CD4-positive, alpha-beta memory T cell (primary cell): ENCODE measurements at regions of chr1 and their contacts with region 1.

Region 1: DNA sequence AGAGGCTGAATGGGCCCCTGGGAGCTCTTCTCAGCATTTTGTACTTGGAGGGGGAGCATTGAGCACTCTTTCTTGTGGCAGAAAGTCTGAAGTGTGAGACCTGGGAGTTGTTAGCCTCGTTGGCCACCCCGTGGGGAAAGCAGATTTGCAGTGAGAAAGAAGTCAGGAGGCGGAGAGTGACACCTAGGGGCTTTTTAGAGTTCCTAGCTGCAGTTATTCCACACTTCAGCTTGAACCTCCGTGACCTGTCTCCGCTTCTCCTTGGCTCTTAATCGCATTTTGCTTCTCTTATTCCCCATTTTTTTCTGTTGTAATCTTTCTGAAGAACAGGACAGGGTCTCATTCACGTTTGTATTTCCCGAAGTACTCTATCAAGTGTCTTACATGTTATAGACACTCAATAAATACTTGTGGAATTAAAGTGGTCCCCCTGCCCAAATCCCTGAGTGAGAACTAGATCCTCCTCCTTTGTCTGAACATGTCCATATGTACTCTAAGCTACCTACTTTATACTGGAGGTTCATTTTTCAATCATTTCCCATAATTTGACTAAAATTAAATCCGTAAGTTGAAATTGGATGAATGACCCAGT is 14.5 kb upstream of the C1orf141 start:
- DNase-seq: peak; percentile 43 to 62 (median 56)
- H3K4me3 ChIP-seq: no peak overlapping the region
- H3K4me3 Mint-ChIP-seq: peak overlapping the region in 1 of 8 donors; percentile 23
- H3K27ac ChIP-seq: no peak overlapping the region
- H3K27ac Mint-ChIP-seq: peak overlapping the region in 1 of 7 donors; percentile 14
- H3K4me1 ChIP-seq: peaks cover 18% of the 10 kb centered on the region
- H3K4me1 Mint-ChIP-seq: peaks cover 17 to 38% (median 23%) of the 10 kb centered on the region in 4 donors
- H3K27me3 ChIP-seq: no peaks in the 10 kb centered on the region
- H3K27me3 Mint-ChIP-seq: peaks cover 1 to 2% of the 10 kb centered on the region in 2 donors

Region 2: GRCh38 chr1:66764994-66765578 is 384.2 kb before region 1 on chr1:
- CTCF ChIA-PET with region 1: interaction called, 51 read pairs
- POLR2A ChIA-PET with region 1: interaction called, 3 read pairs
- intact Hi-C with region 1: loop called (anchors 1 kb)
- DNase-seq: peak; percentile 53 to 59 (median 54)
- H3K4me3 ChIP-seq: no peak overlapping the region
- H3K4me3 Mint-ChIP-seq: no peak overlapping the region
- H3K27ac ChIP-seq: no peak overlapping the region
- H3K27ac Mint-ChIP-seq: no peak overlapping the region
- H3K4me1 ChIP-seq: peaks cover 13% of the 10 kb centered on the region
- H3K4me1 Mint-ChIP-seq: peaks cover 13 to 17% (median 15%) of the 10 kb centered on the region in 4 donors
- H3K27me3 ChIP-seq: no peaks in the 10 kb centered on the region
- H3K27me3 Mint-ChIP-seq: no peaks in the 10 kb centered on the region

Region 3: GRCh38 chr1:66996018-66996682 is 153.1 kb before region 1 on chr1:
- CTCF ChIA-PET with region 1: interaction called, 62 read pairs
- POLR2A ChIA-PET with region 1: interaction called, 4 read pairs
- intact Hi-C with region 1: loop called (anchors 1 kb)
- DNase-seq: peak; percentile 50 to 63 (median 60)
- H3K4me3 ChIP-seq: no peak overlapping the region
- H3K4me3 Mint-ChIP-seq: no peak overlapping the region
- H3K27ac ChIP-seq: no peak overlapping the region
- H3K27ac Mint-ChIP-seq: peak overlapping the region in 1 of 7 donors; percentile 30
- H3K4me1 ChIP-seq: peaks cover 14% of the 10 kb centered on the region
- H3K4me1 Mint-ChIP-seq: peaks cover 10 to 21% (median 19%) of the 10 kb centered on the region in 4 donors
- H3K27me3 ChIP-seq: no peaks in the 10 kb centered on the region
- H3K27me3 Mint-ChIP-seq: no peaks in the 10 kb centered on the region

Region 4: GRCh38 chr1:67053785-67054772 is 95.2 kb before region 1 on chr1 and contains the start of gene SLC35D1:
- CTCF ChIA-PET with region 1: interaction called, 5 read pairs
- POLR2A ChIA-PET with region 1: interaction called, 5 read pairs
- intact Hi-C with region 1: loop called (anchors 2 kb)
- DNase-seq: peak; percentile 68 to 82 (median 77)
- H3K4me3 ChIP-seq: peak within 1 kb of the TSS; percentile 73 to 88
- H3K4me3 Mint-ChIP-seq: peak within 1 kb of the TSS; percentile 93 to 96 (median 95)
- H3K27ac ChIP-seq: peak within 1 kb of the TSS; percentile 91
- H3K27ac Mint-ChIP-seq: peak within 1 kb of the TSS; percentile 66 to 98 (median 97)
- H3K4me1 ChIP-seq: peaks cover 25% of the 10 kb centered on the region
- H3K4me1 Mint-ChIP-seq: peaks cover 21 to 38% (median 28%) of the 10 kb centered on the region in 4 donors
- H3K27me3 ChIP-seq: no peaks in the 10 kb centered on the region
- H3K27me3 Mint-ChIP-seq: no peaks in the 10 kb centered on the region
- total RNA-seq, gene SLC35D1: 16.9 to 17.7 TPM

Region 5: DNA sequence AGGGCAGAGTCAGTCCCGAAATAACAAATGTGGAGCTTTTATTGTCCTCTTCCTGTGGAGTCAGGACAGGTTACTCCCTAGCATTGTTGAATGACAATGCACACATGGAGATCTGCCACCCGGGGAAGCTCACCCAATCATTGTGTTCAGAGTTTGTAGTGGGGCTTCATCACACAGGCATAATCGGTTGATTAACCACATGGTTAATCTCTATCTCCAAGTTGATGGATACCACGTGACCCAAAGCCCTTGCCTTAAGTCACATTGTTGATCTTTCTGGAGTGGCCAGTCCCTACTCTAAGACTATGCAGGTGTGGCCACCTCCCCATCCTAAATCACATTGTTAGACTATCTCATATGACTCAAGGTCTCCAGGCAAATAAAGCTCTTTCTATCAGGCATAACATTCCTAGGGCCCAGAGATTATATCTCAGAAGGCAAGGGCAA is 11.9 kb before region 1 on chr1:
- CTCF ChIA-PET with region 1: interaction called, 12 read pairs
- POLR2A ChIA-PET with region 1: no interaction called
- intact Hi-C with region 1: no loop called
- DNase-seq: no peak
- H3K4me3 ChIP-seq: no peak overlapping the region
- H3K4me3 Mint-ChIP-seq: no peak overlapping the region
- H3K27ac ChIP-seq: no peak overlapping the region
- H3K27ac Mint-ChIP-seq: no peak overlapping the region
- H3K4me1 ChIP-seq: peaks cover 6% of the 10 kb centered on the region
- H3K4me1 Mint-ChIP-seq: peaks cover 4 to 18% (median 10%) of the 10 kb centered on the region in 4 donors
- H3K27me3 ChIP-seq: no peaks in the 10 kb centered on the region
- H3K27me3 Mint-ChIP-seq: peaks cover 4 to 11% of the 10 kb centered on the region in 2 donors

Region 6: GRCh38 chr1:67174716-67175284 is 25.5 kb after region 1 on chr1:
- CTCF ChIA-PET with region 1: interaction called, 14 read pairs
- POLR2A ChIA-PET with region 1: interaction called, 14 read pairs
- intact Hi-C with region 1: loop called (anchors 2 kb)
- DNase-seq: no peak
- H3K4me3 ChIP-seq: no peak overlapping the region
- H3K4me3 Mint-ChIP-seq: peak overlapping the region in 2 of 8 donors; percentile 21 to 40
- H3K27ac ChIP-seq: no peak overlapping the region
- H3K27ac Mint-ChIP-seq: peak overlapping the region in 1 of 7 donors; percentile 52
- H3K4me1 ChIP-seq: peaks cover 40% of the 10 kb centered on the region
- H3K4me1 Mint-ChIP-seq: peaks cover 30 to 59% (median 44%) of the 10 kb centered on the region in 4 donors
- H3K27me3 ChIP-seq: no peaks in the 10 kb centered on the region
- H3K27me3 Mint-ChIP-seq: peaks cover 5 to 7% of the 10 kb centered on the region in 2 donors

Region 7: DNA sequence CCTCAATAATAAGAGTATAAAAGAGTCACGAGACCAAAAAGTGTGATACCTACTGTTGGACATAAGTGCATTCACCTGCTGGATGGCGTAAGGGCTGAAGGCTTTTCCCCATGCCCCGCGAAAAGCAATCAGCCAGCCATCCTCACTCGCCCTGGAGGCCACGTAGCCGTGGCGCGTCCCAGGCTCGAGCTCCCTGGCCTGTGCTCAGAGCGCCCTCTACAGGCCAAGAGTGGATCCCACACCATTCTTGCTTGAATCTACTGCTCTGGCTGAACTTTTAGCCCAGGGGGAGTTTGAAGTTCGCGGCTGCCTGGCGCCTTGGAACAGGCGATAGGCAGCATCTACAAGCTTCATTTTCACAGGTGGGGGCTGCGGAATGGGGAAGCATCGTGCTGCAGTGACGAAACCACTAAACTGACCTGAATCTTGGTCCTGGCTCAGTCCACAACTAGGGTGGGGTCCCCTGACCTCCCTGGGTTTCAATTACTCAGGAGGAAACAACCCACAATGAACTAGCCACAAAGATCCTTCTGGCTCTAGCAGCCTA is 351.2 kb after region 1 on chr1:
- CTCF ChIA-PET with region 1: interaction called, 10 read pairs
- POLR2A ChIA-PET with region 1: no interaction called
- intact Hi-C with region 1: loop called (anchors 2 kb)
- DNase-seq: peak; percentile 77 to 85 (median 81)
- H3K4me3 ChIP-seq: no peak overlapping the region
- H3K4me3 Mint-ChIP-seq: no peak overlapping the region
- H3K27ac ChIP-seq: no peak overlapping the region
- H3K27ac Mint-ChIP-seq: peak overlapping the region in 1 of 7 donors; percentile 29
- H3K4me1 ChIP-seq: peaks cover 2% of the 10 kb centered on the region
- H3K4me1 Mint-ChIP-seq: peaks cover 3 to 5% (median 4%) of the 10 kb centered on the region in 4 donors
- H3K27me3 ChIP-seq: no peaks in the 10 kb centered on the region
- H3K27me3 Mint-ChIP-seq: peaks cover 1 to 3% of the 10 kb centered on the region in 2 donors